GM12878 (cell line): ENCODE measurements at regions of chr5 and their contacts with region 1.

Region 1: GRCh38 chr5:151659001-151659754 is 27.5 kb downstream of the SPARC start:
- DNase-seq: peak; percentile 39
- ATAC-seq: peak; percentile 83
- H3K4me3 ChIP-seq: no peak overlapping the region
- H3K27ac ChIP-seq: no peak overlapping the region
- H3K4me1 ChIP-seq: peaks cover 35% of the 10 kb centered on the region
- H3K27me3 ChIP-seq: no peaks in the 10 kb centered on the region; a peak in 1 of 4 replicates
- CTCF ChIP-seq: peak; percentile 81 to 98 (median 82)
- EP300 ChIP-seq: no peak
- POLR2A ChIP-seq: no peak
- RAD21 ChIP-seq: peak; percentile 96

Region 2: DNA sequence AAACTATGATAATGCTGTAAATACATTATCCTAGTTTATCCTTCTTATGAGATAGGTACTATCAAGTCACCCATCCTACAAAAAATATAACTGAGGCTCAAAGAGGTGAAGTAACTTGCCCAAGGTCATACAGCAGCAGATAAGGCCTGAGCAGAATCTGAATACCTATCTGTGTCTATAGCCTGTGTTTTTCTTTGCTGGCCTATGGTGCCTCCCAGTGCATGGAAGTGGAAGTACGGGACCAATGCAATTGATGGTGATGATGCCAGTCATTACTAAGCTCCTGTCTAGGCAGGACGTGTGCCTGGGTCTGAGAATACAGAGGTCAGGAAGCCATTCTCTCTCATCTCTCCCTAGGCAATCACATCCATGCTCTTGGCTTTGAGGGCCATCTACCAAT is 135.8 kb before region 1 on chr5:
- CTCF ChIA-PET with region 1: interaction called, 105 read pairs
- POLR2A ChIA-PET with region 1: no interaction called
- RAD21 ChIA-PET with region 1: interaction called, 6 read pairs
- SMC1A ChIA-PET with region 1: interaction called, 4 read pairs
- in situ Hi-C with region 1: loop called (anchors 5 kb)
- intact Hi-C with region 1: no loop called
- DNase-seq: no peak
- ATAC-seq: peak; percentile 97
- H3K4me3 ChIP-seq: no peak overlapping the region
- H3K27ac ChIP-seq: no peak overlapping the region
- H3K4me1 ChIP-seq: no peaks in the 10 kb centered on the region
- H3K27me3 ChIP-seq: peaks cover 0 to 1% of the 10 kb centered on the region in 2 experiments; a peak in 2 of 4 replicates
- CTCF ChIP-seq: peak; percentile 64 to 71 (median 68); a peak in 5 of 6 replicates
- EP300 ChIP-seq: no peak
- POLR2A ChIP-seq: no peak
- RAD21 ChIP-seq: peak; percentile 77

Region 3: DNA sequence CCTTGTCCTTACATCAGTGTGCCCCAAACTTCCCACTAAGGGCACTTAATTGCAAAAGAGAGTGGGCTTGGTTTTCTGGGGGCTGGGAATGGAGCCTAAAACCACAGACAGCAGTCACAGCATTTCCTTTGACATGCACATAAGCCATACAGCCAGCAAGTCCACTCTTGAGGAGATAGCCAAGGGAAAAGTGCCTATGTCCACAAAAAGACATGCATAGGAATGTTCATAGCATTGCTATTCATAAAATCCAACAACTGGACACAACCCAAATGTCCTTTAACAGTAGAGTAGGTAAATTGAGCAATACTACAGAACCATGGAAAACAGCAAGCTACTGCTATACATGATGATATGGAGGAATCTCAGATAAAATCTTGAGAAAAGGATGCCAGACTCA is 56.4 kb before region 1 on chr5:
- CTCF ChIA-PET with region 1: no interaction called
- POLR2A ChIA-PET with region 1: no interaction called
- RAD21 ChIA-PET with region 1: no interaction called
- SMC1A ChIA-PET with region 1: no interaction called
- in situ Hi-C with region 1: no loop called
- intact Hi-C with region 1: no loop called
- DNase-seq: no peak
- ATAC-seq: no peak
- H3K4me3 ChIP-seq: no peak overlapping the region
- H3K27ac ChIP-seq: no peak overlapping the region
- H3K4me1 ChIP-seq: no peaks in the 10 kb centered on the region
- H3K27me3 ChIP-seq: no peaks in the 10 kb centered on the region
- CTCF ChIP-seq: no peak
- EP300 ChIP-seq: no peak
- POLR2A ChIP-seq: no peak
- RAD21 ChIP-seq: no peak

Region 4: DNA sequence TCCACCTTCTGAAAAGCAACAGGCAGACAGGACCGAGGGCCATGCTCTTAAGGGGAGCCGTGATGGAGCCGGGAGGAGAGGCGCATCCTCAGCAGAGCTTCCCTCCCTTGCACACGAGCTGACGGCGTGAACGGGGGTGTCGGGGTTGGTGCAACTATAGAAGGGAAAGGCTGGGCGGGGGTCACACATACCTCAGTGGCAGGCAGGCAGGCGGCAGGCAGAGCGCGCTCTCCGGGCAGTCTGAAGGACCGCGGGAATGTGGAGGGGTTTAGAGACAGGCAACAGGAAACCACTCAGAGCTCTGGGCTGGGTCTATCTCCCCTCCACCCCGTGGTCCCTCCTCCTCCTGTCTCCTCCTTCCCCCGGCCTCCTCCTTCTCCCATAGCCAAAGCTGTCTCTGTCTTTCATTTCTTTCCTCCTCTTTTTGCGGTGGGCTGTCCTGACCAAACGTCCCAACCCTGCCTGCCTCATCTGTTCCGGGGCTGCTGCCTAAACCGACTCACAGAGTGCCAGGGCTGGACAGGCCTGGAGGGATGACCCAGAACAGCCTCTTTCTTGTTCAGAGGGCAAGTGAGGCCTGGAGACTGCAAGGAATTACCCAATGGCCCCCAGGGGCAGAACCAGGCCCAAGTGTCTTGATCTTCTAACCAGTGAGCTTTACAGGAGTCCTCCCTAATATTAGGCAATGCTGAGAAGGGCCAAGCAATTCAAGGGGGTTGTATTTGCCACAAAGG is 27.7 kb after region 1 on chr5 and contains the start of gene SPARC:
- CTCF ChIA-PET with region 1: interaction called, 4 read pairs
- POLR2A ChIA-PET with region 1: no interaction called
- RAD21 ChIA-PET with region 1: interaction called, 4 read pairs
- SMC1A ChIA-PET with region 1: interaction called, 9 read pairs
- in situ Hi-C with region 1: no loop called
- intact Hi-C with region 1: loop called (anchors 2 kb)
- DNase-seq: no peak
- ATAC-seq: peak; percentile 79
- H3K4me3 ChIP-seq: peak within 1 kb of the TSS; percentile 88
- H3K27ac ChIP-seq: peak within 1 kb of the TSS; percentile 52
- H3K4me1 ChIP-seq: peaks cover 10% of the 10 kb centered on the region
- H3K27me3 ChIP-seq: no peaks in the 10 kb centered on the region
- CTCF ChIP-seq: no peak
- EP300 ChIP-seq: no peak
- POLR2A ChIP-seq: peak; percentile 71
- RAD21 ChIP-seq: no peak
- polyA plus RNA-seq, gene SPARC: 42.9 to 62.5 TPM

Region 5: GRCh38 chr5:151719228-151720000 is 60.2 kb after region 1 on chr5:
- CTCF ChIA-PET with region 1: interaction called, 165 read pairs
- POLR2A ChIA-PET with region 1: interaction called, 37 read pairs
- RAD21 ChIA-PET with region 1: interaction called, 112 read pairs
- SMC1A ChIA-PET with region 1: interaction called, 256 read pairs
- in situ Hi-C with region 1: no loop called
- intact Hi-C with region 1: loop called (anchors 1 kb)
- DNase-seq: no peak
- ATAC-seq: peak; percentile 45
- H3K4me3 ChIP-seq: no peak overlapping the region
- H3K27ac ChIP-seq: peak overlapping the region; percentile 94
- H3K4me1 ChIP-seq: peaks cover 55% of the 10 kb centered on the region
- H3K27me3 ChIP-seq: no peaks in the 10 kb centered on the region
- CTCF ChIP-seq: peak; percentile 28 to 58 (median 53); a peak in 5 of 6 replicates
- EP300 ChIP-seq: no peak
- POLR2A ChIP-seq: no peak
- RAD21 ChIP-seq: peak; percentile 71

Region 6: DNA sequence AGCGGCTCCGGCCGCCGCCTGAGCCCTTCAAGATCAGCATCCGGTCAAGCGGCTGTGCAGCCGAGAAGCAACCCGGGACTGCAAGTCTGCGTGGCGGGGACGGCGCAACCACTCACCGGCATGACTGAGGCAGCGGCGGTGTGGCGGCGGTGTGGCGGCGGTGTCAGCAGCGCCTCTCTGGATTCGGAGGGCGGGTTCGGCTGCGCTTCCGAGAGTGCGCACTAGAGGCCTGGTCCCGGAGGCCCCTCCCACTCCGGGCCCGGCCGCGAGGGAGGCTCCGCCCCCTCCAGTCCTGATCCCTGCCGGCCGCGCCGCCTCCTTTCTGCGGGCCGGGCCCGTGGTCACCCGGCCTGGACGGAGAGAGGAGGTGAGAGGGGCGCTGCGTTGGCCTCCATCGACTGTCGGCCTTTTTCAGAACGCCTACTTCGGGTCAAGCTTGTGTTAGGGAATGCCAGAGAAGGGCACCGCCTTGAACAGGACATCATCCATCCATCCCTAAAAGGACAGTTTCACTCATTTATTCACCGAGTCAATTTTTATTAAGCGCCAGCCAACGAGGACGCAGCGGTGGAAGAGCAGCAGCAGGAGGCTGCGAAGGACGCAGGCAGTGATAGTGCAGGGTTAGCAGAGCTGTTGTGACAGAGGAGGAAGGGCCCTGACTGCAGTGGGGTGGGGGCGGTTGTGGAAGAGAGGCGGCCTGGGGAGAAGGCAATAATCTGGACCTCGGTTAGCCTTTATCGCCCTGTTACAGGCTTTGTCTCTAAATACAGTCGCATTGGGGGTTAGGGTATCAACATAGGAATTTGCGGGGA is 99.5 kb after region 1 on chr5 and contains the start of gene ATOX1:
- CTCF ChIA-PET with region 1: interaction called, 20 read pairs
- POLR2A ChIA-PET with region 1: interaction called, 4 read pairs
- RAD21 ChIA-PET with region 1: interaction called, 74 read pairs
- SMC1A ChIA-PET with region 1: interaction called, 10 read pairs
- in situ Hi-C with region 1: no loop called
- intact Hi-C with region 1: no loop called
- DNase-seq: peak; percentile 58
- ATAC-seq: peak; percentile 96
- H3K4me3 ChIP-seq: peak within 1 kb of the TSS; percentile 98
- H3K27ac ChIP-seq: peak within 1 kb of the TSS; percentile 86
- H3K4me1 ChIP-seq: peaks cover 23% of the 10 kb centered on the region
- H3K27me3 ChIP-seq: no peaks in the 10 kb centered on the region
- CTCF ChIP-seq: peak in 1 of 3 experiments; percentile 9; a peak in 1 of 6 replicates
- EP300 ChIP-seq: no peak
- POLR2A ChIP-seq: peak; percentile 100
- RAD21 ChIP-seq: no peak
- polyA plus RNA-seq, gene ATOX1: 576 to 642 TPM

Region 7: GRCh38 chr5:152349683-152350526 is 690.7 kb after region 1 on chr5:
- CTCF ChIA-PET with region 1: interaction called, 7 read pairs
- POLR2A ChIA-PET with region 1: no interaction called
- RAD21 ChIA-PET with region 1: no interaction called
- SMC1A ChIA-PET with region 1: interaction called, 4 read pairs
- in situ Hi-C with region 1: no loop called
- intact Hi-C with region 1: loop called (anchors 5 kb)
- DNase-seq: no peak
- ATAC-seq: peak; percentile 92
- H3K4me3 ChIP-seq: no peak overlapping the region
- H3K27ac ChIP-seq: no peak overlapping the region
- H3K4me1 ChIP-seq: no peaks in the 10 kb centered on the region
- H3K27me3 ChIP-seq: no peaks in the 10 kb centered on the region
- CTCF ChIP-seq: peak; percentile 82 to 92 (median 90)
- EP300 ChIP-seq: no peak
- POLR2A ChIP-seq: no peak
- RAD21 ChIP-seq: peak; percentile 69